Endothelial cell of umbilical vein (primary cell): ENCODE measurements at regions of chr7 and their contacts with region 1.

Region 1: DNA sequence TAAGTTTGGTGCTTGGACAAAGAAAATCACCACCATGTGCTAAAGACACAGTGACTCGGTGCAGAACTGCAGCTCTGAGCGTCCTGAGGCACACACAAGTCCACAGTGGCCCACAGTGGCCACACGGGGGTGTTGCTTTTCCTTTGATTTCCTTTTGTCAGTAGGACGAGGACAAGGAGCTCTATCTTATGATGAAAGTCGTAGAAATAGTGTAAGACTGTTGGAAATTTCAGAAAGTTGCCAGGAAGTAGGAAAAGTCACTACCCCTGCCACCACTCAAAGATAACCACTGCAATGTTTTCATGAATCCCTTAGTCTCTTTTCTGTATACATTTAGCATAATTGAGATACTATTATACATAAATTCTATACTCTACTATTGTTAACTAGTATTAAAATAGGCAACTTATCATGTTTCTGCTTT is 146.0 kb downstream of the TNS3 start:
- DNase-seq: peak; percentile 68
- H3K4me3 ChIP-seq: no peak overlapping the region
- H3K27ac ChIP-seq: no peak overlapping the region
- H3K4me1 ChIP-seq: no peaks in the 10 kb centered on the region
- H3K27me3 ChIP-seq: no peaks in the 10 kb centered on the region
- CTCF ChIP-seq: peak; percentile 78 to 82
- POLR2A ChIP-seq: no peak

Region 2: GRCh38 chr7:47392231-47392759 is 43.6 kb before region 1 on chr7:
- CTCF ChIA-PET with region 1: no interaction called
- POLR2A ChIA-PET with region 1: no interaction called
- dilution Hi-C with region 1: no loop called
- intact Hi-C with region 1: no loop called
- DNase-seq: no peak
- H3K4me3 ChIP-seq: no peak overlapping the region
- H3K27ac ChIP-seq: no peak overlapping the region
- H3K4me1 ChIP-seq: no peaks in the 10 kb centered on the region
- H3K27me3 ChIP-seq: no peaks in the 10 kb centered on the region
- CTCF ChIP-seq: no peak
- POLR2A ChIP-seq: no peak

Region 3: GRCh38 chr7:47453093-47454049 is 17.5 kb after region 1 on chr7:
- CTCF ChIA-PET with region 1: interaction called, 24 read pairs
- POLR2A ChIA-PET with region 1: interaction called, 3 read pairs
- dilution Hi-C with region 1: no loop called
- intact Hi-C with region 1: no loop called
- DNase-seq: peak; percentile 74
- H3K4me3 ChIP-seq: peak overlapping the region in 2 of 3 experiments; percentile 38 to 72
- H3K27ac ChIP-seq: peak overlapping the region; percentile 99
- H3K4me1 ChIP-seq: peaks cover 46% of the 10 kb centered on the region
- H3K27me3 ChIP-seq: no peaks in the 10 kb centered on the region
- CTCF ChIP-seq: no peak
- POLR2A ChIP-seq: no peak

Region 4: DNA sequence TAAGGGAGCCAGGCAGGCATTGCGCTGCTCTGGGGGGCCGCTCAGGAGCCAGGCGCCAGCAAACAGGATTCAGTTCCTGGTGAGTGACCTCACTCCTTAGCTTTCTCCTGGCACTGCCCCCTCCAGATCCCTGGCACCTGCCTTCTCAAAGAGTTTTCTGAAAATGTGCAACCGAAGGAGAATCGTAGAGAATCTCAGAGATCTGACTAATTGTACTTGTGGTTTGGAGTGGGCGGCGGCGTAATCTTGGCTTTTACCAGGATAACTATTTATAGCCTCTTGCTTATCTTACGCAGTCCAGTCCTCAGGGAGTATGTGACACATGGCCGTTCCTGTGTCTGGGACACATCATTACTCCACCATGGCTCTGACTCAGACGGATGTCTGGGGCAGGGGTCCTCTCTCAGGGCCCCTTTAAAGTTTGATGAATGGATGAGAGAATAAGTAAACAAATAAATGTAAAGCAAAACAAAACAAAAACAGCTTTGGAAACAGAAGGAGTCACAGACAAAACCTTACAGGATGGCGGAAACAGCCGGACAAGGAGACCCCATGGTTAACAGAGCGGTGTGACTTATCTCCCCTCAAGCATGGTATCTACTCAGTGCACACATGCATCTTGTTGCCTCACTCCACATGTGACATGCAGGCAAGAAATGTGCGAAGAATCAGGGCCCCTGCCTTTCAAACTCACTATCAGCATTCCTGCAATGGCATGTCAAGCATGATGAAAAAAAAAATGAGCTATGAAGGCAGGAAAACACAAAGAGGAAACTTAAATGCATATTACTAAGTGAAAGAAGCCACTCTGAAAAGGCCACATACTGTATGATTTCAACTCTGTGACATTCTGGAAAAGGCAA is 46.3 kb after region 1 on chr7:
- CTCF ChIA-PET with region 1: interaction called, 13 read pairs
- POLR2A ChIA-PET with region 1: no interaction called
- dilution Hi-C with region 1: no loop called
- intact Hi-C with region 1: no loop called
- DNase-seq: peak; percentile 83
- H3K4me3 ChIP-seq: no peak overlapping the region
- H3K27ac ChIP-seq: peak overlapping the region; percentile 89
- H3K4me1 ChIP-seq: peaks cover 16% of the 10 kb centered on the region
- H3K27me3 ChIP-seq: no peaks in the 10 kb centered on the region
- CTCF ChIP-seq: no peak
- POLR2A ChIP-seq: peak; percentile 49

Region 5: DNA sequence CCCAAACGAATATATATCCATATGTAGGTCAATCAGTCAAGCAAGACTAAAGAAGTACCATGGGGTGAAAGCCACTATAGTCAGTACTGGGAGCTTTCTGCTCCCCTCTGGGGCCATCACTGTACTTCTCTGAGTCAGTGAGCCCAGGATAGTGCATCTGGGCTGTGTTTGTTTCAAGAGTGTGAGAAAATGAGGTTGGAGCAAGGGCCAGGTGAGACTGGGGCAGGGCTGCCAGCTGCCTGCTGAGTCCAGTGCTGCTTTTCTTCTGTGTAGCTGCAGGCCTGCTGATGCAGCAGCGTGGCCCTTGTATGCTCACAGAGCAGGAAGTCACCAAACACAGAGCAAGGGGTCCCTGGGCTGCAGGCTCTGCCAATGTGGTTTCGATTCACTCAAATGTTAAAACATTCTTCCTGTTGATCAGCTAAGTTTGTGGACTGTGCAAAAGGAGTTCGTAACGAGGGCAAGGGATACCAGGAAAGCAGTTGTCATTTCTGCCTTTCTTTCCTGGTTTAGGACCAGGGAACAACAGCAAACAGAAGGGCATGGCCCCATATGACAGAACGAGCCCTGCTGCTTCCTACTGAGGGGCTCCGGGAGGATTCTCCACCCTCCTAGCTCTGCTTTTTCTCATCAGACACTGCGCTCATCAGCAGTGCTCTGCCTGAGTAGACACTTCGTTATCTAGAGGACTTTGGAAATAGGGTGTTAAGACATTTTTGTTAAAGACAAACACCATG is 211.4 kb after region 1 on chr7:
- CTCF ChIA-PET with region 1: no interaction called
- POLR2A ChIA-PET with region 1: no interaction called
- dilution Hi-C with region 1: no loop called
- intact Hi-C with region 1: no loop called
- DNase-seq: no peak
- H3K4me3 ChIP-seq: no peak overlapping the region
- H3K27ac ChIP-seq: no peak overlapping the region
- H3K4me1 ChIP-seq: no peaks in the 10 kb centered on the region
- H3K27me3 ChIP-seq: no peaks in the 10 kb centered on the region
- CTCF ChIP-seq: no peak
- POLR2A ChIP-seq: no peak

Region 6: GRCh38 chr7:47786557-47787248 is 350.8 kb after region 1 on chr7:
- CTCF ChIA-PET with region 1: interaction called, 11 read pairs
- POLR2A ChIA-PET with region 1: no interaction called
- dilution Hi-C with region 1: no loop called
- intact Hi-C with region 1: no loop called
- DNase-seq: peak; percentile 98
- H3K4me3 ChIP-seq: no peak overlapping the region
- H3K27ac ChIP-seq: peak overlapping the region; percentile 100
- H3K4me1 ChIP-seq: peaks cover 51% of the 10 kb centered on the region
- H3K27me3 ChIP-seq: no peaks in the 10 kb centered on the region
- CTCF ChIP-seq: no peak
- POLR2A ChIP-seq: no peak